ENCODE measurements at regions of chr15 and their contacts with region 1.

Region 1: DNA sequence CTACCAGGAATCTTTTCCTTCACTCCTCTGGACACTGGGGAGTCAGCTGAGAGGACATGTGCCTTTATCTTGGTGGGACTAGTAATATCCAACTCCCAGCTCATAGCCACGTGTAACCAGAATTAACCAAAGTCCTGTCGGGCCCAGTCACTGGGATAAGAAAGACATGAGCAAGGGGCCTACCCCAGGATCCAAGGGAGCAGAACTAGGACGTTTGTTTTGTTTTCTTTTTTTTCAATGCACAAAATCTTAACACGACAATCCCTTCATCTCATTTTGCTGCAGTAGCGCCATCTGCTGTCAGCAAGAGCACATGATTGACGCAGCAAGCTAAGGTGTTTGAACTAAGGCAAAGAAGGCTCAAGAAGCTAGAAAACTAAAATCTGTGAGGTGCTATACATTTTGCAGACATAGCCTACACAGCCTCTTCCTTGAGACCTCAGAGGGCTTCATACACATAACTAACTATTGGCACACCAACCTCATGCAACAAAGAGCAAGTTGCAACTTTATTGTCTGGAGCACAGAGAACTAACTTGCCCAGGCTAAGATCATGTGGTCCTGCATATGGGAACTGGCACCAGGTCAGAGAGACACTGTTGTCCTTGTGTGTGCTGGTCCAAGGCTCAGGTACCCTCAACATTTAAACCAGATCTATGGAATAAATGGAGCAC is 43.6 kb downstream of the RLBP1 start:
- DNase-seq: peak in 3 of 4 donors; percentile 45 to 86 (median 73)
- ATAC-seq: peak; percentile 64
- H3K4me3 ChIP-seq: no peak overlapping the region
- H3K27ac ChIP-seq: no peak overlapping the region
- H3K4me1 ChIP-seq: peaks cover 0 to 7% of the 10 kb centered on the region in 2 donors
- H3K27me3 ChIP-seq: no peaks in the 10 kb centered on the region
- CTCF ChIP-seq: peak; percentile 73 to 76

Region 2: DNA sequence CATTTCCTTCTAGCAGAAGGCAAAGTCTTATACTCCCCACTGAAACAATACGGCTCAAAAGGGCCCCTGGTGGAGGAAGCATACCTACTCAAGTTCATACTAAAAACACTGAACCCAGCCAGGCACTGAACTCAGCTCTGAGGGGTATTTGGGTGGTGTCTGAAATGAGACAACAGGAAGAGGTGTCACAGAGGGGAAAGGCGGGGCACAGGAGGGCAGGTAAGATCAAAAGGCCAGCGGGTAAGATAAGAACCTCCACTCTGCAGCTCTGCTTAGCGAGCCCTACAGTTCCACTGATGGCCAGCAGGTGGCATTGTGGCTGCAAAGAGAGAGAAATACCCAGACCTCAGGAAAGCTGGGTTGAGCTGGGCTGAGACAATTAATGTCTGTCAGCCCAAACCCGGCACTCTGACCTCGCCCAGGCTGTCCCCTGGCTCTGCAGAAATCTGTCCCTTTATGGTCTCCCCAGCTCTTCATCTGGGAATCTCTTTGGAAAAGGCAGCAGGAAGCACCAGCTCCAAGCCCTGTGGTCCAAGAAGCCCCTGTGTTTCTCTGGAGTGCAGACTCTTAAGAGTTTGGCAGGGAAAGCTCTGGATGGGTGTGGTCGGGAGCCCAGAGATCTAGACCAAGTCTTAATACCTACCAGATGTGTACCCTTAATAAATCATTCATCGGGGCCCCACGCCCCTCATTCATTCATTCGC is 273.0 kb before region 1 on chr15:
- intact Hi-C with region 1: loop called in 1 of 2 experiments (anchors 10 kb)
- DNase-seq: peak in 3 of 4 donors; percentile 76 to 90 (median 82)
- ATAC-seq: peak; percentile 96
- H3K4me3 ChIP-seq: no peak overlapping the region
- H3K27ac ChIP-seq: no peak overlapping the region
- H3K4me1 ChIP-seq: peaks cover 0 to 10% of the 10 kb centered on the region in 2 donors
- H3K27me3 ChIP-seq: no peaks in the 10 kb centered on the region
- CTCF ChIP-seq: peak; percentile 99

Region 3: GRCh38 chr15:89057504-89058133 is 120.2 kb before region 1 on chr15:
- intact Hi-C with region 1: loop called in 1 of 2 experiments (anchors 5 kb)
- DNase-seq: peak; percentile 64 to 95 (median 80)
- ATAC-seq: peak; percentile 99
- H3K4me3 ChIP-seq: no peak overlapping the region
- H3K27ac ChIP-seq: no peak overlapping the region
- H3K4me1 ChIP-seq: peaks cover 0 to 4% of the 10 kb centered on the region in 2 donors
- H3K27me3 ChIP-seq: no peaks in the 10 kb centered on the region
- CTCF ChIP-seq: peak; percentile 99 to 100

Region 4: DNA sequence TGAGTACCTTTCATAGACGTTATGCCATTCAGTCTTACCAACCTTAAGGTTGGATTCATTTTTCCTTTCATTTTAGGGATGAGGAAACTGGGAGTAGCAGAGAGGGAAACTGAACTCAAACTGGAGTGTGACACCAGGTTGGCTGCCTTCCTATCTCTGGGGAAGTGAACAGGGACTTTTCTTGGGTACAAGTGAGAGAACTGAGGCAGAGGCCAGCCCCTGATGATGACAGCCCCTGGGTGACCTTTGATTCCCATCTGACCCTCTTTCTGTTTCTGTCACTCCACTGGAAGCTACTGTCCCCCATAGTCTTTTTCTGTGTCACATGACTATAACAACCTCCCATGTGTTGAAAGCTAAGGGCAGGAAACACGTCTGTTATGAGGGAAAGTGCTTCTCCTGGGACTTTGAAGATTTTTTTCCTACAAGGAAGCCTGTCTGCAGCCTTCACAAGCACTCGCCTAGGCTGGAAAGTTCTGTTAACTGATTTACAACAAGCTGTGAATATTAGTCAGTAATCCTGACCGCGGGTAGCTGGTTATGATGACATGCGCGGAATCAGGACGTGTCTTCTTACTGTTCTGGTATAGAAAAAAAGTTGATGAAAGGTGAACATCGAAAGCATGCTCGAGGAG is 58.2 kb before region 1 on chr15:
- intact Hi-C with region 1: no loop called
- DNase-seq: no peak
- ATAC-seq: peak; percentile 28
- H3K4me3 ChIP-seq: no peak overlapping the region
- H3K27ac ChIP-seq: peak overlapping the region; percentile 70 to 74
- H3K4me1 ChIP-seq: peaks cover 20 to 50% of the 10 kb centered on the region in 2 donors
- H3K27me3 ChIP-seq: no peaks in the 10 kb centered on the region
- CTCF ChIP-seq: no peak